AG04450 (cell line): ENCODE measurements at regions of chr6 and their contacts with region 1.

Region 1: GRCh38 chr6:39088331-39088730 is 26.7 kb downstream of the SAYSD1 start:
- DNase-seq: peak; percentile 55
- H3K4me3 ChIP-seq: no peak overlapping the region
- H3K27ac ChIP-seq: no peak overlapping the region
- H3K27me3 ChIP-seq: no peaks in the 10 kb centered on the region
- CTCF ChIP-seq: peak; percentile 72

Region 2: DNA sequence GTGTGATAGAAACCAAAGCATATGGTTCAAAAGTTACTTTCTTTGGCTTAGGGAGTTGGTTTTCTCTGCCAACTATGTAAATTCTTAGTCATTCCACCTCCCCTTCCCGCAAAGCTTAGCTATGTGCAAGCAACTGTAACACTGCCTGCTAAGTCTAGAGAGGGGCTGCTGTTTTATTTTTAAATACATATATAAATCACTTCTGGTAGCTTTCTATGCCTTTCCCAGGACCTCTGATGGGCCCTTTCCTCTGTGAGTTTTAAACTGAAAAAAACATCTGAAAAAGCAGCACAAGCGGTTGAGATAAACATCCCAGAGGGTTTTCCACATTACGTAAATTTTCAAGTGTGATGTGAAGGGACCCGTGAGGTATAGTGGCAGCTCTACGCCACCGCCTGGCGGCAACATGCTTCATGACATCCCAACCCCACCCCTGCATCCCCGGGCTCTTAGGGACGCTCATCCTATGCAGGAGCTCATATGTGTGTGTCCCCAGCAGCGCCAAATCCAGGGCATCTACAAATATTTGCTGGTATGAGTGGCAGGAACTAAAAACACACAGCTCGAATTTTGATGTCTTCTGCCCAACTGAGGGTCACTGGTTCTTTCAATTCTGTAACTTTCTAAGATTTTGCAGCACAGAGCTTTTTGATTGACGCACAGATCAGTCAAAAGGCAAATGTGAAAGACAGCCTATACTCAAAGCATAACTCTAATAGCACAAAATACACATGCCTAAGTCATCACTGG is 13.9 kb after region 1 on chr6:
- CTCF ChIA-PET with region 1: interaction called, 30 read pairs
- POLR2A ChIA-PET with region 1: interaction called, 8 read pairs
- DNase-seq: peak; percentile 49
- H3K4me3 ChIP-seq: no peak overlapping the region
- H3K27ac ChIP-seq: no peak overlapping the region
- H3K27me3 ChIP-seq: no peaks in the 10 kb centered on the region
- CTCF ChIP-seq: peak; percentile 58

Region 3: GRCh38 chr6:39114704-39115599 is 26.6 kb after region 1 on chr6 and contains the start of gene SAYSD1:
- CTCF ChIA-PET with region 1: interaction called, 11 read pairs
- POLR2A ChIA-PET with region 1: interaction called, 3 read pairs
- DNase-seq: peak; percentile 69
- H3K4me3 ChIP-seq: peak within 1 kb of the TSS; percentile 82
- H3K27ac ChIP-seq: peak within 1 kb of the TSS; percentile 91
- H3K27me3 ChIP-seq: no peaks in the 10 kb centered on the region
- CTCF ChIP-seq: no peak; the same call in 1 of the 2 replicates
- polyA plus RNA-seq, gene SAYSD1: 10.2 and 12.8 TPM in 2 replicates

Region 4: DNA sequence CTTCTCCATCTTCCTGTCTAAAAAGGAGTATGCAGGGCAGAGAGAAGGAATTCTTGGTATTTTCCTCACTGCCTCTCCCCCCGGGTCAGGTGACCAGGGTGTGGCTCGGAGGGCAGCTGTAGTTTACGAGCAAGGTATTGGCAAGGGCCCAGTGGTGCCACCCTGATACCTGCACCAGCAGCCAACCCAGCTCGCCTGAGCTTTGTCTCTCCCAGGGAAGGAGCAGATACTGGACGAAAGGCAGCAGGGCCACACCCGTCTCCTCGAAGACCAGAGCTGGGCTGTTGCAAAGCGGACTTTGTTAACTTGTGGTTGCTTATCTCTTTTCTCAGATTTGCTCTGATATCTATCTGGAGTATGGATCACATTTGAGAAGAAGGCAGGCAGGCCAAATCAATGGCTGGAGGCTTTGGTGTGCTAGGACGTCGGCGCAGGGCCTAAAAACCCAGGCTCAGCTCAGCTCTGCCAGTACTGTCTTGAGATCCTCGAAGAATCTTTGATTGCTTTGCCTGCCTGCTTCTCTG is 115.6 kb after region 1 on chr6:
- CTCF ChIA-PET with region 1: no interaction called
- POLR2A ChIA-PET with region 1: no interaction called
- DNase-seq: no peak
- H3K4me3 ChIP-seq: no peak overlapping the region
- H3K27ac ChIP-seq: no peak overlapping the region
- H3K27me3 ChIP-seq: no peaks in the 10 kb centered on the region
- CTCF ChIP-seq: no peak

Region 5: DNA sequence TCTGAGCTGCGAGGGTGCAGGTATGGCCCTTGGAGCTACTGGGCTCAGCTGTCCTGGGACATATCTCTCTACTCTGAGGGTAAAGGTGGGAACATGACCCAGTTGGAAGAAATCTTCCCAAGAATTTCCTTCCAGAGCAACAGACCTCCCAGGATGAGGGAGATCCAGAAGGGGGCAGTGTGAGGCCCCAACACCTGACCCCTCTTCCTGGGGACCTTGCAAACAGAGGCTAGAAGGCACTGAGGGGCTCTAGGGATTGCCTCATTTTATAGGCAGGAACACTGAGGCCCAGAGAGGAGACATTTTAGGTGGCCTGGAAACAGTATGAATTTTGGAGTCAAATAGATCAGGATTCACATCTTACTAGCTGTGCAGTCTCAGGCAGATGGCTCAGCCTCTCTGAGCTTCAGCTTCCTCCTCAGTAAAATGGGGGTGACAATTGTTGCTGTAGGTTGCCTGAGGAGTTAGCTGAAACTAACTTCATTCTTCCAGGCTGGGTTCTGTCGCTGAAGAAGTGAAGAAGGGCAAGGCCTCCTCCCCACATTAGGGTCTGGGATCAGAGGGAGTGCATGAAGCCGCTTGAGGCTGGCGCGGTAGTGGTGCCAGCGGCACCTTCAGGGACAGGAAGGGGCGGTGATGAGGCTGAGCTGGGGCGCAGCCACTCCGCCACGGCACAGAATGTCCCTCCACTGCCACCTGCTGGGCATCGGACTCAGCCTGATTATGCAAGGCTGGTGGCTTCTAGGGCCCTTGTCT is 214.5 kb after region 1 on chr6:
- CTCF ChIA-PET with region 1: interaction called, 31 read pairs
- POLR2A ChIA-PET with region 1: no interaction called
- DNase-seq: peak; percentile 2
- H3K4me3 ChIP-seq: no peak overlapping the region
- H3K27ac ChIP-seq: no peak overlapping the region
- H3K27me3 ChIP-seq: no peaks in the 10 kb centered on the region
- CTCF ChIP-seq: peak; percentile 81